ENCODE measurements at regions of chr13 and their contacts with region 1.

Region 1: DNA sequence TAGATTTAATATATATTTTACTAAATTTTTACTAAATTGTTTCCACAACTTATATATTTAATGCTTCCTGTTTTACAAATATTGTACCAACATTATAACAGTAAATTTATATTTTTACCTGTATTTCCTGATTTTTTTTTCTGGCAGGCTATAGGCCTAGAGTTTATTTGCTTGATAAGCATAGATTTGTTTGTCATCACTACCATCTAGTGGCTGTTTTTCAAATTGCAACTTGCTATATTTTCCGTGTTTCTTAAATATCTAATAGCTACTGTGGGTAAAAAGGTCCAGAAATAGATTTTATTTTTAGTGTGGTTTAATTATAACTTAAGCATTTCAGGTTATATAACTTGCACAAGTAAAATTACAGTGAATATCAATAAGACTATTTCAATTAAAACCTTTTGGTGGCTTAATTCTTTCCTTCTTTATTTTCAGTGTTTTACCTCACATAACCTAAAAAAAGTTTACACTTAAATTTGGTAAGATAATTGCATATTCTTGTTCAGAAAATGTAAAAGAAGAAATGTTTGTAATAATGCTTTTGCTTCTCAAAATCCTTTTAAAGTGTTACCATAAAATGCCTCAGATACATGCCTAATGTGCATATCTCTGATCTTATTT is 60.6 kb downstream of the NDFIP2 start:
- DNase-seq: peak; percentile 79
- H3K4me3 ChIP-seq: no peak overlapping the region
- H3K27ac ChIP-seq: no peak overlapping the region
- H3K4me1 ChIP-seq: no peaks in the 10 kb centered on the region
- H3K27me3 ChIP-seq: no peaks in the 10 kb centered on the region
- CTCF ChIP-seq: peak; percentile 33 to 50
- POLR2A ChIP-seq: no peak

Region 2: GRCh38 chr13:79258489-79258888 is 283.0 kb before region 1 on chr13:
- CTCF ChIA-PET with region 1: no interaction called
- POLR2A ChIA-PET with region 1: no interaction called
- dilution Hi-C with region 1: no loop called
- intact Hi-C with region 1: no loop called
- DNase-seq: no peak
- H3K4me3 ChIP-seq: no peak overlapping the region
- H3K27ac ChIP-seq: no peak overlapping the region
- H3K4me1 ChIP-seq: no peaks in the 10 kb centered on the region
- H3K27me3 ChIP-seq: peaks cover 0 to 2% of the 10 kb centered on the region in 2 experiments
- CTCF ChIP-seq: no peak
- POLR2A ChIP-seq: no peak

Region 3: DNA sequence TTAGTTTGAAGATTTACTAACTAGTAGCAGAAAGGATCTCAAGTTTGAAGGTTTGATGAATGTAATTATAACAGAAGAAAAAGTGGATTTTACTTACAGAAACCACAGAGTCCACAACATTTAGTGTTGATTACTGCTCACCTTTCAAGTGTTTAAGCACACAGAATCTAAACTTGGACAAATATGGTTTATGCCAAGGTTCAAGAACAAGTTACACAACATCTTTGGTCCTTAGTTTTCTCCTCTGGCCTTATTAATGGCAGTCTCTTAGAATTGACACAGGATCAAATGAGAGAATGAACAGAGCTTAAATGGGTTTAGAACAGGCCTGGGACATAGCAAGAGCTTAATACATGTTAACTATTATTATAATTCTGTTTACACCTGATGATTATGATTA is 268.5 kb before region 1 on chr13:
- CTCF ChIA-PET with region 1: no interaction called
- POLR2A ChIA-PET with region 1: no interaction called
- dilution Hi-C with region 1: no loop called
- intact Hi-C with region 1: no loop called
- DNase-seq: no peak
- H3K4me3 ChIP-seq: no peak overlapping the region
- H3K27ac ChIP-seq: no peak overlapping the region
- H3K4me1 ChIP-seq: no peaks in the 10 kb centered on the region
- H3K27me3 ChIP-seq: peaks cover 0 to 2% of the 10 kb centered on the region in 2 experiments
- CTCF ChIP-seq: no peak
- POLR2A ChIP-seq: no peak

Region 4: DNA sequence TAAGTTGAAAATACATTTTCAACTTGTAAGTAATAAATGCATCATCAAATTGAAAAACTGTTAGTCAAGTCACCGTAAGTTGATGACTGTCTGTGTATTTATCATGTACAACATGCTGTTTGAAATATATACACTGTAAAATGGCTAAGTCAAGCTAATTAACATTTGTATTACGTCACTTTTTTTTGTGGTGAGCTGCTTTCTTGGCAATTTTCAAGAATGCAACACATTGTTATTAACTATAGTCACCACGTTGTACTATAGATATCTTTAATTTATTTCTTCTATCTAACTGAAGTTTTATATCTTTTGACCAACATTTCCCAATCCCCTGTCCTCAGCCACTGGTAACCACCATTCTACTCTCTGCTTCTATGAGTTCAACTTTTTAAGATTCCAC is 192.5 kb before region 1 on chr13:
- CTCF ChIA-PET with region 1: no interaction called
- POLR2A ChIA-PET with region 1: no interaction called
- dilution Hi-C with region 1: no loop called
- intact Hi-C with region 1: no loop called
- DNase-seq: no peak
- H3K4me3 ChIP-seq: no peak overlapping the region
- H3K27ac ChIP-seq: no peak overlapping the region
- H3K4me1 ChIP-seq: peaks cover 20% of the 10 kb centered on the region
- H3K27me3 ChIP-seq: no peaks in the 10 kb centered on the region
- CTCF ChIP-seq: no peak
- POLR2A ChIP-seq: no peak

Region 5: GRCh38 chr13:79405829-79406596 is 135.5 kb before region 1 on chr13 and contains the start of gene RBM26:
- CTCF ChIA-PET with region 1: interaction called, 12 read pairs
- POLR2A ChIA-PET with region 1: no interaction called
- dilution Hi-C with region 1: no loop called
- intact Hi-C with region 1: loop called (anchors 5 kb)
- DNase-seq: peak; percentile 95
- H3K4me3 ChIP-seq: peak within 1 kb of the TSS; percentile 89 to 99 (median 99)
- H3K27ac ChIP-seq: peak within 1 kb of the TSS; percentile 90
- H3K4me1 ChIP-seq: peaks cover 40% of the 10 kb centered on the region
- H3K27me3 ChIP-seq: no peaks in the 10 kb centered on the region
- CTCF ChIP-seq: no peak
- POLR2A ChIP-seq: peak; percentile 84
- total RNA-seq, gene RBM26: 43.7 and 54.3 TPM in 2 replicates

Region 6: GRCh38 chr13:79435561-79435990 is 106.0 kb before region 1 on chr13:
- CTCF ChIA-PET with region 1: interaction called, 54 read pairs
- POLR2A ChIA-PET with region 1: interaction called, 3 read pairs
- dilution Hi-C with region 1: no loop called
- intact Hi-C with region 1: no loop called
- DNase-seq: peak; percentile 46
- H3K4me3 ChIP-seq: no peak overlapping the region
- H3K27ac ChIP-seq: no peak overlapping the region
- H3K4me1 ChIP-seq: no peaks in the 10 kb centered on the region
- H3K27me3 ChIP-seq: no peaks in the 10 kb centered on the region
- CTCF ChIP-seq: no peak
- POLR2A ChIP-seq: no peak

Region 7: GRCh38 chr13:79480954-79481684 is 60.4 kb before region 1 on chr13 and contains the start of gene NDFIP2:
- CTCF ChIA-PET with region 1: interaction called, 15 read pairs
- POLR2A ChIA-PET with region 1: no interaction called
- dilution Hi-C with region 1: no loop called
- intact Hi-C with region 1: loop called (anchors 2 kb)
- DNase-seq: peak; percentile 85
- H3K4me3 ChIP-seq: peak within 1 kb of the TSS; percentile 90 to 95 (median 93)
- H3K27ac ChIP-seq: peak within 1 kb of the TSS; percentile 23
- H3K4me1 ChIP-seq: peaks cover 9% of the 10 kb centered on the region
- H3K27me3 ChIP-seq: peaks cover 22 to 37% of the 10 kb centered on the region in 2 experiments
- CTCF ChIP-seq: no peak
- POLR2A ChIP-seq: peak; percentile 65
- total RNA-seq, gene NDFIP2: 18.5 and 21.8 TPM in 2 replicates

Region 8: GRCh38 chr13:79528759-79529191 is 12.8 kb before region 1 on chr13:
- CTCF ChIA-PET with region 1: interaction called, 15 read pairs
- POLR2A ChIA-PET with region 1: no interaction called
- dilution Hi-C with region 1: no loop called
- intact Hi-C with region 1: no loop called
- DNase-seq: no peak
- H3K4me3 ChIP-seq: no peak overlapping the region
- H3K27ac ChIP-seq: no peak overlapping the region
- H3K4me1 ChIP-seq: peaks cover 21% of the 10 kb centered on the region
- H3K27me3 ChIP-seq: no peaks in the 10 kb centered on the region
- CTCF ChIP-seq: no peak
- POLR2A ChIP-seq: no peak

Measured in endothelial cell of umbilical vein (primary cell).